H1 (cell line): ENCODE measurements at regions of chr22 and their contacts with region 1.

Region 1: GRCh38 chr22:17570851-17571641 is 7.7 kb downstream of the SLC25A18 start:
- DNase-seq: no peak
- H3K4me3 ChIP-seq: no peak overlapping the region
- H3K27ac ChIP-seq: peak overlapping the region; percentile 38
- H3K4me1 ChIP-seq: peaks cover 3 to 8% (median 6%) of the 10 kb centered on the region in 4 experiments; a peak in 5 of 7 replicates
- H3K27me3 ChIP-seq: no peaks in the 10 kb centered on the region
- CTCF ChIP-seq: no peak
- EP300 ChIP-seq: no peak
- POLR2A ChIP-seq: no peak
- RAD21 ChIP-seq: no peak

Region 2: DNA sequence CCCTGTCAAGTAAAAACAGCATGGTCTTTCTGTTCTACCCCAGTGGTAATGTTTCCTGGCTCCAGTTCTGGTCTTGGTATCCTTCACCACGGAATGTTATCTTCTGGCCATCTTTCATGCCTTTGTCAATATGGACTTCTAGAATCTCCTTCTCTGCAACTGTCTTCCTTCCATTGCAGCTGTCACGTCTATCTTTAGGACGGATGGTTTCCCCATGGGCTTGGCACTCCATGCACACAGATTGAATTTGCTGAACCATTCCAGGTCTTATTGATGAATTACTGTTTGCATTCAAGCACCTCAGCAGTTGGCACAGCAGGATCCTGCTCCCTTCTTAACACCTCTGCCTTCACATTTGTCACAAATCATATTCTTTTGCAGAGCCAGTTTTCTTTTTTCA is 52.6 kb before region 1 on chr22:
- CTCF ChIA-PET with region 1: no interaction called
- POLR2A ChIA-PET with region 1: no interaction called
- DNase-seq: no peak
- H3K4me3 ChIP-seq: no peak overlapping the region
- H3K27ac ChIP-seq: no peak overlapping the region
- H3K4me1 ChIP-seq: no peaks in the 10 kb centered on the region
- H3K27me3 ChIP-seq: no peaks in the 10 kb centered on the region
- CTCF ChIP-seq: no peak
- EP300 ChIP-seq: no peak
- POLR2A ChIP-seq: no peak
- RAD21 ChIP-seq: no peak

Region 3: DNA sequence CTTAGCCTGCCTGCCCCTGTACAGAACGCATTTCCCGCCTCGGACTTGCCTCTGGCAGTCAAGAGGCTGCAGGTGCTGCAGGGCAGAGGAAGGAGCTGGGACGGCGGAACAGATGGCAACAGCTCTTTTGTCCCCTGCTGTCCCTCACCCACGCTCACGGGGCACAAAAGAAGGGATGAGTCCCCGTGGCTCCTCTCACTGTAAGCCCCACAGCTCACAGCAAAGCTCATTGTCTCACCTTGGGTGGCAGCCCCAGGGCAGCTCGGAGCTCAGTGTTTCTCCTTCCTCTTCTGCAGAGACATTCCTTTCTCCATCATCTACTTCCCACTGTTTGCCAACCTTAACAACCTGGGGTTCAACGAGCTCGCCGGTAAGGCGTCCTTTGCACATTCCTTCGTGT is 16.6 kb after region 1 on chr22:
- CTCF ChIA-PET with region 1: interaction called, 3 read pairs
- POLR2A ChIA-PET with region 1: interaction called, 16 read pairs
- DNase-seq: no peak
- H3K4me3 ChIP-seq: no peak overlapping the region
- H3K27ac ChIP-seq: no peak overlapping the region
- H3K4me1 ChIP-seq: no peaks in the 10 kb centered on the region
- H3K27me3 ChIP-seq: no peaks in the 10 kb centered on the region
- CTCF ChIP-seq: no peak
- EP300 ChIP-seq: no peak
- POLR2A ChIP-seq: no peak
- RAD21 ChIP-seq: no peak